K562 (cell line): ENCODE measurements at regions of chr1 and their contacts with region 1.

Region 1: DNA sequence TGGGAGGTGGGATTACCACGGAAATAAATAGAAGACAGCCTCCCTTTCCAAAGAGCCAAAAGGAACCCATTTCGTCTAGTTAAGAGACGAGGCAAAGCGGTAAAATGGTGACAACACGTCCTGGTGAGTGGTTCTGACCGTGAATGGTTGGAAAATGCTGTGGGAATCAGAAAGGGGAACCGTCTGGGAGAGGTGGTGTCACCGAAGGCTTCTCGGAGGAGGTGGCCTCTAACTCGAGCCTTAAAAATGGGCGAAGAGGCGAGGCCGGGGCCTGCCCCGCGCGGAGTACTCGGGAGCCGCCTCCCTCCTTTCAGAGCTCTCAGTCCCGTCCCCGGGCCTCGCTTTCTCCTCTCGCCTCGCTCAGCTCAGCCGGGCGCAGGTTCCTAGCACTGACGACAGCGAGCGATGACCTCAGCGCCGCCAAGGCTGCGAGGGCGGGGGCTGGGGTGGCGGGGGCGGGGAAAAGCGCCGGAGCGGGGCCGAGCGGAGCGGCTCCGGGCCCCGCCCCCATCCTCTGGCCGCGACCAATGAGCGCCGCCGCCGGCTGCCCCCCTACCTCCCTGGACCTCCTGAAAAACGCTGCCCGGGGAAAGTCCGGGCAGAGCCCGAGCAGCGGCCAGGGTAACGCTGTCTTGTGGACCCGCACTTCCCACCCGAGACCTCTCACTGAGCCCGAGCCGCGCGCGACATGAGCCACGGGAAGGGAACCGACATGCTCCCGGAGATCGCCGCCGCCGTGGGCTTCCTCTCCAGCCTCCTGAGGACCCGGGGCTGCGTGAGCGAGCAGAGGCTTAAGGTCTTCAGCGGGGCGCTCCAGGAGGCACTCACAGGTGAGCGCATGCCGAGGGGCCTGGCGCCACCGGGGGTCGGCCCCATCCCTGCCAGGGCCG is at the start of gene BTG2:
- DNase-seq: peak; percentile 96 to 99 (median 98)
- ATAC-seq: peak; percentile 86
- H3K4me3 ChIP-seq: peak within 1 kb of the TSS; percentile 69
- H3K27ac ChIP-seq: peak within 1 kb of the TSS; percentile 90
- H3K4me1 ChIP-seq: peaks cover 65 to 67% of the 10 kb centered on the region in 2 experiments
- H3K27me3 ChIP-seq: no peaks in the 10 kb centered on the region
- CTCF ChIP-seq: no peak
- EP300 ChIP-seq: 0 out of 2 replicates have a peak, but pooled peaks have one; percentile 1
- POLR2A ChIP-seq: peak; percentile 95
- RAD21 ChIP-seq: peak in 1 of 2 experiments; percentile 3; a peak in 1 of 4 replicates
- polyA plus RNA-seq, gene BTG2: 2.3 to 3.8 TPM

Region 2: DNA sequence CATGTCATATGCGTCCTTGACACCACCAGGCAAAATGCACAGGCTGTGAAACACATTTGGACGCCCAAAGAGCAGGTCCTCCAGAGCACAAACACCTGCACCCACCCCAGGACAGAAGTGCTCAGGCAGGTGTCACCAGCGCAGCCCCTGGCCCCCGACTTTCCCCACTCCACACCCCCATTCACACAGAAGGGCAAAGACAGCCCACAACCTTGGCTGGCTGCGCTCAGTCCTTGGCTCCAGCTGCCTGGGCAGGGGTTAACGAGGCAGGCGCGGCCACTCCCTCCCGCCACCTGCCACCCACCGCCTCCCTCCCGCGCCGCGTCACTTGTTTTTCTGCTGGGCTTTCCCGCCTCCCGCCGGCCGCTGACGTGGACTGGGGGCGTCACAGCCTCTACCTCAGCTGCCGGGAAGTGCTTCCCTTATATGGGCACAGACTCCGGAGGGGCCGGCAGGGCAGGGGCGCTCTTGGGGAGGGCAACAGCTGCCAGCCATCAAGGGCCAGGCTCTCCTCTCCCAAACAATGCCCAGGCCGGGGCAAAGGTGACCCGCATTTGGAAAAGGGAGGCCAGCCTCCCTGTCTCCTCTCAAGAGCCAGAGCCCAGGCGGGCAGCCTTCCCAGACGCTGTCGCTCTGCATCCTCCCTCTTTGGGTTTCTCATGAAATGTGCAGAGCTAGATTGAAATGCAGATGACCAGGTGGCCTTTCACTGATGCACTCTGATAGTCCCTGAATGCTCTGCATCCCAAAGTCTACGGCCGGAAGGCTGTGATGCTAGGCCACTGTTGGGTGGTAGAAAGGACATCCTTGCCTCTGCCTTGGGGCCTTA is 14.7 kb before region 1 on chr1:
- CTCF ChIA-PET with region 1: interaction called, 4 read pairs
- POLR2A ChIA-PET with region 1: interaction called, 84 read pairs
- in situ Hi-C with region 1: no loop called
- intact Hi-C with region 1: no loop called
- DNase-seq: peak; percentile 85 to 92 (median 90)
- ATAC-seq: peak; percentile 80
- H3K4me3 ChIP-seq: no peak overlapping the region
- H3K27ac ChIP-seq: peak overlapping the region; percentile 50; the same call in 2 of the 3 replicates
- H3K4me1 ChIP-seq: peaks cover 38 to 53% of the 10 kb centered on the region in 2 experiments
- H3K27me3 ChIP-seq: no peaks in the 10 kb centered on the region
- CTCF ChIP-seq: no peak
- EP300 ChIP-seq: no peak
- POLR2A ChIP-seq: no peak; the same call in 1 of the 2 replicates
- RAD21 ChIP-seq: no peak

Region 3: GRCh38 chr1:203316626-203317093 is 11.5 kb after region 1 on chr1:
- CTCF ChIA-PET with region 1: no interaction called
- POLR2A ChIA-PET with region 1: interaction called, 117 read pairs
- in situ Hi-C with region 1: no loop called
- intact Hi-C with region 1: no loop called
- DNase-seq: peak in 2 of 4 experiments; percentile 57 to 67
- ATAC-seq: peak; percentile 31
- H3K4me3 ChIP-seq: no peak overlapping the region
- H3K27ac ChIP-seq: no peak overlapping the region
- H3K4me1 ChIP-seq: peaks cover 32 to 41% of the 10 kb centered on the region in 2 experiments
- H3K27me3 ChIP-seq: no peaks in the 10 kb centered on the region
- CTCF ChIP-seq: no peak
- EP300 ChIP-seq: no peak
- POLR2A ChIP-seq: no peak
- RAD21 ChIP-seq: no peak

Region 4: GRCh38 chr1:203463469-203464062 is 158.4 kb after region 1 on chr1:
- CTCF ChIA-PET with region 1: no interaction called
- POLR2A ChIA-PET with region 1: no interaction called
- in situ Hi-C with region 1: no loop called
- intact Hi-C with region 1: no loop called
- DNase-seq: no peak
- ATAC-seq: no peak; the same call in 2 of the 3 replicates
- H3K4me3 ChIP-seq: no peak overlapping the region
- H3K27ac ChIP-seq: no peak overlapping the region
- H3K4me1 ChIP-seq: no peaks in the 10 kb centered on the region
- H3K27me3 ChIP-seq: peaks cover 51 to 57% of the 10 kb centered on the region in 2 experiments
- CTCF ChIP-seq: no peak
- EP300 ChIP-seq: no peak
- POLR2A ChIP-seq: no peak
- RAD21 ChIP-seq: no peak